ENCODE measurements at regions of chr20 and their contacts with region 1.

Region 1: GRCh38 chr20:17003170-17003870 is 223.5 kb upstream of the PCSK2 start:
- DNase-seq: no peak
- ATAC-seq: no peak
- H3K4me3 ChIP-seq: no peak overlapping the region
- H3K27ac ChIP-seq: no peak overlapping the region
- H3K4me1 ChIP-seq: no peaks in the 10 kb centered on the region
- H3K27me3 ChIP-seq: peaks cover 5% of the 10 kb centered on the region
- CTCF ChIP-seq: no peak
- POLR2A ChIP-seq: no peak
- RAD21 ChIP-seq: no peak

Region 2: GRCh38 chr20:17594443-17594842 is 591.1 kb after region 1 on chr20:
- CTCF ChIA-PET with region 1: interaction called, 10 read pairs
- POLR2A ChIA-PET with region 1: no interaction called
- dilution Hi-C with region 1: no loop called
- in situ Hi-C with region 1: no loop called
- intact Hi-C with region 1: no loop called
- DNase-seq: peak; percentile 87
- ATAC-seq: peak; percentile 91
- H3K4me3 ChIP-seq: no peak overlapping the region
- H3K27ac ChIP-seq: no peak overlapping the region
- H3K4me1 ChIP-seq: peaks cover 17% of the 10 kb centered on the region
- H3K27me3 ChIP-seq: no peaks in the 10 kb centered on the region
- CTCF ChIP-seq: no peak
- POLR2A ChIP-seq: no peak
- RAD21 ChIP-seq: peak; percentile 12; the same call in 1 of the 2 replicates